A673 (cell line): ENCODE measurements at regions of chr1 and their contacts with region 1.

Region 1: DNA sequence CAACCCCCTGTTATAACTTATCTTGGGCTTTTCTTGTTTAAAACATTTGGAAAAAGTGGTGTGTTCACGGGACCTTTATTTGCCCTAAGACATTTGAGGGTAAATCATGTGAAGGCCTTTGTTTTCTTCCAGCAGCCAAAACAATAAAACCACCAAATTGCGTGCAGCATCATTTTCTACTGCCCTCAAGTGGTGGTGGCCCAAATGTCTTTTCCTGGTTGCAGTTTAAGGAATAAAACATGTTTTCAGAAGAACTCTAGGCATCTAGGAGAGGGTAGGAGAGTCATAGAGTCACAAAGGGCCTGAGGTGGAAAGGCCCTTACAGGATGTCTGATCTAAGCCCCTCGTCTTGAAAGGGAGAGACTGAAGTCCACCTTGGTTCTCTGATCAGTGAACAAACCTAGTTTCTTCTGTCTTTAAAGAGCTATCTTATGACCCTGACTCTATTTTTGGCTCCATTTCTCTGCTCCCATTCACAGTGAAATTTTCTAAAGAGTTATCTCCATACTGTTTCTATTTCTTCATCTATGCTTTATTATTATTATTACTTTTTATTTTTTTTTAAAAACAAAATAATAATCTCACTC is 16.0 kb upstream of the EPS15 start:
- DNase-seq: peak; percentile 80
- H3K4me3 ChIP-seq: no peak overlapping the region
- H3K27ac ChIP-seq: no peak overlapping the region
- H3K4me1 ChIP-seq: no peaks in the 10 kb centered on the region
- H3K27me3 ChIP-seq: no peaks in the 10 kb centered on the region
- CTCF ChIP-seq: peak; percentile 84

Region 2: DNA sequence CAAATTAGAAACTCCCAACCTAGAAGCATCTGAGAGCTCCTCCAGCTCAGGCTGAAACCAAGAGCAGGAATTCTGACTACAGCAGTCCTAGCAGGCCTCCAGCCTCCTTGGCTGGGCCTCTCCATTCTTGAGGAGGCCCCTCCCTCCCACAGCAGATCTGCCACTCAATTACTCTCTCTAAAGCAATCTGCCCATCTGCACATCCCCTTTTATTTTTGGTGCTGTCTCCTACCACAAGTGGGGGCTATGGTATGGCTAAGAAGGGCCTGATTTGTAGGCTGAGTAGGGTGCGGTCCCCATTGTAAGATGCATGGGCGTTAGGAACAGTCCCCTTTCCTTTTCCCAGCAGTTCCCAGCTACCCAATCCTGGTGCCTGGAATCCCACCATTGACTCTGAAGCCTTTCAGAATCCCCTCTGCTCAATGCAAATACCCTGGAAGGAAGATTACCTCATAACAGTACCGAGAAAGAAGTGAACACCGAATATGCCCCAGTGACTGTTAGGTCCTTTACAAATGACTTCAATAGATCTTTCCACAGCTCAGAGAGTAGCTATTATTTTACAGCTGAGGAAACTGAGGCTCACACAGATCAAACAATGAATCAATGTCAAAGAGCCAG is 193.1 kb before region 1 on chr1:
- CTCF ChIA-PET with region 1: interaction called, 4 read pairs
- POLR2A ChIA-PET with region 1: no interaction called
- intact Hi-C with region 1: loop called (anchors 2 kb)
- DNase-seq: peak; percentile 72
- H3K4me3 ChIP-seq: no peak overlapping the region
- H3K27ac ChIP-seq: no peak overlapping the region
- H3K4me1 ChIP-seq: peaks cover 6% of the 10 kb centered on the region
- H3K27me3 ChIP-seq: no peaks in the 10 kb centered on the region
- CTCF ChIP-seq: peak; percentile 64